ENCODE measurements at regions of chr13 and their contacts with region 1.

Region 1: DNA sequence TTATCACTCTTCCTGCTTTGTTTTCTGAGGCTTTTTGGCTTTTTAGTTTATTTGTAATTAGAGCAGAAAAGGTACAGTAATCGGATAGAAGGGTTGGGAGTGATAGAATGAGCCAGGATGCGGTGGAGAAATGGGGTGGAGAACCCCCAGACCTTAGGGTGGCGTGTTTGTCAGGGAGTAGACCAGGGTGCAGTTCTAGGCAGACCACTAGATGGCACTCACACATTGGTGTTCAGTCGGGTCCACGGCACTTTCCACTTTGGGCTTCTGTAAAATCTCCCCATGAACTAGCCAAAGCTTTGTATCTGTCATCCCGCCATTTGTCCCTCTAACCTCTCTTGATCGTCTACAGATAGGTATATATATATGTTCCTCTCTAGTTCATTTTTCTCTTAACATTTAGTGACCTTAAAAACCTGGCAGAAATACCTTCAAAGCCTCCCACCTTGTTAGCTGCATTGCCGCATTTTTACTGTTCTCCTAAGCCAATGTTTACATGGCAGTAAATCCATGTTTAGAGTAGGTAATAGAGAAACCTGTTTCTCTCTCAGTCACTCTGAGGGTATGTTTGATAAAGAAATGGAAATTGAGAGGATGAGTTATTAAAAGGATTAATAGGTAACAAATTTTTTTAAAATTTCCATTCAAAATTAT is 154.9 kb downstream of the TM9SF2 start:
- DNase-seq: peak in 1 of 2 donors; percentile 86
- H3K4me3 ChIP-seq: no peak overlapping the region
- H3K27ac ChIP-seq: no peak overlapping the region
- H3K4me1 ChIP-seq: peaks cover 0 to 5% of the 10 kb centered on the region in 2 donors
- H3K27me3 ChIP-seq: no peaks in the 10 kb centered on the region
- CTCF ChIP-seq: peak; percentile 79 to 85 (median 85)

Region 2: DNA sequence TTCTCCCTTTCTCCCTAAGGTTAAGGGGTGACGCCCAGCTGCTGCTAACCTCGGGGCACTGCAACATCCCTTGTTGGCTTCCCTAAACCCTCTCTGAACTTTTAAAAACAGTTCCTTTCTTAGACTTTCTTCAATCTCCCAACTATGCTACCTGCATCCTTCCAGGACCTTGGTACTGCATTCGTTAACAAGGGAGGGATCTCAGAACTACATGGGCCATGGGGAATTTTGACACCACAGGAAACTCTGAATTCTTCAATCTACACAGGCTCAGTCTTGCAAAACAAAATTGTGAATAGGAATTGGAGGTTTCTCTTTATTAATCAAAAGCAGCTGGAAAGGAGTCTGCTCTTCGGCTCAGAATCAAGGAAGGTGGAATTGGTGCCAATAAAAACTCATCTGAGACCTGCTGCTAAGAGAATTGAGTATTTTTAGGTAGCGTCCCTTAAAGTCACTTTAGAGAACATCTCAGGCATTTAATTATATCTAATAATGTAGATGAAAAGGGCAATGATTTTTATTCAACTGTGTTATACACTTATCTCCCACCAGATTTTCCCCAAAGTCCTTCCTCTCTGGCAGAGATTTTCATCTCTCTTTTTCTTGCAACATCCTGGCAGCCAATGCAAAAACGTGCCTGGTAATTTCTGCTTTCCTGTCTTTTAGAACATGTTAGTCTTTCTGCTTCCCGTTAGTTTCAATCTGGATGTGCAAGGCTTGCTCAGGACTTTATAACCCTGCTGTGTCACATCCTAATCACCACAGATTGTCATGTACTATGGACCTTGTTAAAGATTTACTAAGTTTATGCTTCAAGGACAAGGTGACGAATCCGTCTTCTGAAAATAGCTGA is 834.6 kb before region 1 on chr13:
- intact Hi-C with region 1: no loop called
- DNase-seq: no peak
- H3K4me3 ChIP-seq: no peak overlapping the region
- H3K27ac ChIP-seq: peak overlapping the region; percentile 51 to 66
- H3K4me1 ChIP-seq: peaks cover 8 to 17% of the 10 kb centered on the region in 2 donors
- H3K27me3 ChIP-seq: no peaks in the 10 kb centered on the region
- CTCF ChIP-seq: no peak

Region 3: GRCh38 chr13:99606324-99607066 is 49.7 kb before region 1 on chr13:
- intact Hi-C with region 1: no loop called
- DNase-seq: peak; percentile 54 to 91
- H3K4me3 ChIP-seq: peak within 1 kb of the TSS; percentile 61 to 96
- H3K27ac ChIP-seq: peak within 1 kb of the TSS; percentile 60 to 88
- H3K4me1 ChIP-seq: peaks cover 0 to 3% of the 10 kb centered on the region in 2 donors
- H3K27me3 ChIP-seq: no peaks in the 10 kb centered on the region
- CTCF ChIP-seq: peak in 1 of 3 experiments; percentile 1

Region 4: DNA sequence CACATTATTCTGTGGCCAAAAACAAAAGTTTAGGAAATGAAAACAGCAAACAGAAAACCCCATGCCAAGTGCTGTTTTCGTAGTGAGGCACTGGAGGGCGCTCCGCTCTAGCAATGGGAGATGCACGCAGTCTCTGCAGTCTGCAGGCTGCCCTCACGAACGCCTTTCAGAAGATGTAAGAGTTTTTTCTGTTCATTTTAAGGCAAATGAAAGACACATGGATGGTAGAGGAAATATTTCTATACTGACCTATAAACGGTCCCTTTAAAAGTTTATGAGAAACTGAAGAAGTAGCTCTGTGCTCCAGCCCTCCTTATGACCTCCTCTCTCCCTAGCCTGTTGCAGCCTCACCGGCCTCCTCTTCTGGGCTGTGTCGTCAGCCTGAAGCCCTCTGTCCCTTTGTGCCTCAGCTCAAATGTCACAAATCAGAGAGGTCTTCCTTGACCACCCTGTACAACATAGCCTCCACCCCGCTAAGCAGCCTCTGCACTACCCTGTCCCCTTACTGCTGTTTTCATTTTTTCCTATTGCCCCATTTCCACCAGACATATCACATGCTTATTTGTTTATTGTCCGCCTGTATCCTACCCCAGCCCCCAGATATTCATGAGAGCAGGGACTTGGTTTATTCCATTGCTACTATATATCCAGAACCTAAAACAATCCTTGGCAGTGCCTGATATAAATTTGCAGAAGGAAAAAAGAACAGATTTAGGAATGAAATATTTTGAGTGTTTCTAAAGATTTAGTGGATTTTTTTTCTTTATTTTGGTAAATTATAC is 38.6 kb before region 1 on chr13:
- intact Hi-C with region 1: loop called (anchors 2 kb)
- DNase-seq: no peak
- H3K4me3 ChIP-seq: no peak overlapping the region
- H3K27ac ChIP-seq: no peak overlapping the region
- H3K4me1 ChIP-seq: peaks cover 5 to 13% of the 10 kb centered on the region in 2 donors
- H3K27me3 ChIP-seq: no peaks in the 10 kb centered on the region
- CTCF ChIP-seq: peak; percentile 65 to 79 (median 72)

Region 5: GRCh38 chr13:100051070-100051469 is 394.9 kb after region 1 on chr13:
- intact Hi-C with region 1: no loop called
- DNase-seq: no peak
- H3K4me3 ChIP-seq: no peak overlapping the region
- H3K27ac ChIP-seq: no peak overlapping the region
- H3K4me1 ChIP-seq: no peaks in the 10 kb centered on the region
- H3K27me3 ChIP-seq: no peaks in the 10 kb centered on the region
- CTCF ChIP-seq: no peak

Region 6: GRCh38 chr13:100088644-100089464 is 432.6 kb after region 1 on chr13 and contains the start of gene PCCA:
- intact Hi-C with region 1: loop called (anchors 5 kb)
- DNase-seq: peak; percentile 77 to 96
- H3K4me3 ChIP-seq: peak within 1 kb of the TSS; percentile 87 to 96
- H3K27ac ChIP-seq: peak within 1 kb of the TSS; percentile 75 to 80
- H3K4me1 ChIP-seq: peaks cover 0 to 8% of the 10 kb centered on the region in 2 donors
- H3K27me3 ChIP-seq: no peaks in the 10 kb centered on the region
- CTCF ChIP-seq: no peak
- total RNA-seq, gene PCCA: 3.6 TPM

Region 7: GRCh38 chr13:100235311-100235901 is 579.2 kb after region 1 on chr13:
- intact Hi-C with region 1: loop called (anchors 2 kb)
- DNase-seq: no peak
- H3K4me3 ChIP-seq: no peak overlapping the region
- H3K27ac ChIP-seq: no peak overlapping the region
- H3K4me1 ChIP-seq: no peaks in the 10 kb centered on the region
- H3K27me3 ChIP-seq: no peaks in the 10 kb centered on the region
- CTCF ChIP-seq: peak in 2 of 3 experiments; percentile 42 to 55

Region 8: DNA sequence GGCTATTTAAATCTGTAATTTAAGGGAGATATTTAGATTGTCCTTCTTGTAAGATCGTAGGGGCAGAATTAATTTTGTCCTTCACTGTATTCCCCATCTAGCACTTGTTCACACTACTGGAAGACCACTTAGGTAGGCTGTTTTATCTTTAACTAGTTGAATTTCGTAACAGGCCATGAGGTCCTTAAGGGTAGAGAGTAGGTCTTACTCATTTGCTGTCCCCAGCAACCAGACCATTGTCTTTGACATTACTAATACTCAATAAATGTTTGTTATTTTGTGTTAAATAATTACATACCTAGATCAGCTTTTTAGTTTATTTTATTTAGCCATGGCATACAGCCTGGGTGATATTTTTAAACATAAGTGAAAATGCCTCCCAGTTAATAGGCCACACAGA is 609.8 kb after region 1 on chr13:
- intact Hi-C with region 1: no loop called
- DNase-seq: no peak
- H3K4me3 ChIP-seq: no peak overlapping the region
- H3K27ac ChIP-seq: no peak overlapping the region
- H3K4me1 ChIP-seq: no peaks in the 10 kb centered on the region
- H3K27me3 ChIP-seq: no peaks in the 10 kb centered on the region
- CTCF ChIP-seq: no peak

Region 9: GRCh38 chr13:100514788-100515409 is 858.7 kb after region 1 on chr13:
- intact Hi-C with region 1: loop called (anchors 1 kb)
- DNase-seq: peak in 1 of 2 donors; percentile 81
- H3K4me3 ChIP-seq: no peak overlapping the region
- H3K27ac ChIP-seq: no peak overlapping the region
- H3K4me1 ChIP-seq: no peaks in the 10 kb centered on the region
- H3K27me3 ChIP-seq: no peaks in the 10 kb centered on the region
- CTCF ChIP-seq: peak; percentile 59 to 90 (median 88)